Sigmoid colon (tissue), 7 donors: ENCODE measurements at regions of chr19 and their contacts with region 1.

Region 1: GRCh38 chr19:55461259-55461973 is at the start of gene ISOC2:
- DNase-seq: peak; percentile 100
- H3K4me3 ChIP-seq: peak within 1 kb of the TSS; percentile 61 to 93 (median 86)
- H3K27ac ChIP-seq: peak within 1 kb of the TSS; percentile 93 to 98 (median 96)
- H3K4me1 ChIP-seq: peaks cover 0 to 34% (median 24%) of the 10 kb centered on the region in 4 donors
- H3K27me3 ChIP-seq: no peaks in the 10 kb centered on the region
- CTCF ChIP-seq: no peak
- EP300 ChIP-seq: no peak
- POLR2A ChIP-seq: peak; percentile 77 to 78
- total RNA-seq, gene ISOC2: 90.3 to 114 (median 101) TPM

Region 2: DNA sequence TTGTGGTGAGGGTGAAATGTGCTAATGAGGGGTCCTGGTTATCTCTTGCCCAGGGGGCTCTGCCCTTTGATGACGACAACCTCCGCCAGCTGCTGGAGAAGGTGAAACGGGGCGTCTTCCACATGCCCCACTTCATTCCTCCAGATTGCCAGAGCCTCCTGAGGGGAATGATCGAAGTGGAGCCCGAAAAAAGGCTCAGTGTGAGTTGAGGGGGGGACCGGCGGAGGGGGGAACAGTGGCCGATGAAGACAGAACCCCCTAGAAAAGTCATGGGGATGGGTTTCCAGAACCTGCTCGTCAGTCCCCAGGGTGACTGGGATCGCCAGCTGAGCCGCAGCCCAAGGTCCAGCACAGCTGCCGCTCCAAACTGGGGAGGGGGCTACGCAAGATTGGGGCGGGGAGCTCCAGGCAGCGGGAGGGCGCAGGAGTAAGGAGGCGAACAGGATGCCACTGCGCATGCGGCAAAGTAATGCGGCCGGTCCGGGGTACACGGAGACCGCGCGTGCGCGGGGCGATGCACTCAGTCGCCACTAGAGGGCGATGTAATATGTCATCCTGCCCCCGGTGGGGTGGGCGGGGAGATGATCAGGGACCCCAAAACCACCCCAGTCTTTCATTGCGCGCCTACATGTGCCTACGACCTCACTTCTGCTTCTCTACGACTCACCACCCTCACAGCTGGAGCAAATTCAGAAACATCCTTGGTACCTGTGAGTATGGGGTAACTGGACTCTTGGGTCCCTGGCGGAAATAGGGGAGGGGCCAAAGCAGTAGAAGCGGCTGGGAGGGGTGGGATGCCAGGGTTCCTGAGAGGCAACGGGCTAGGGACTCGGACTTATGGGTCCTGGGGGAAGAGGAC is 159.7 kb before region 1 on chr19:
- intact Hi-C with region 1: no loop called
- DNase-seq: peak; percentile 93
- H3K4me3 ChIP-seq: peak overlapping the region in 3 of 4 donors; percentile 30 to 44 (median 38)
- H3K27ac ChIP-seq: peak overlapping the region in 1 of 4 donors; percentile 42
- H3K4me1 ChIP-seq: peaks cover 0 to 13% (median 10%) of the 10 kb centered on the region in 4 donors
- H3K27me3 ChIP-seq: no peaks in the 10 kb centered on the region
- CTCF ChIP-seq: peak; percentile 91 to 100 (median 95)
- EP300 ChIP-seq: no peak
- POLR2A ChIP-seq: no peak

Region 3: GRCh38 chr19:55407800-55408532 is 53.5 kb before region 1 on chr19:
- intact Hi-C with region 1: loop called (anchors 2 kb)
- DNase-seq: peak; percentile 100
- H3K4me3 ChIP-seq: peak overlapping the region; percentile 82 to 99 (median 89)
- H3K27ac ChIP-seq: peak overlapping the region; percentile 96 to 100 (median 98)
- H3K4me1 ChIP-seq: peaks cover 0 to 22% (median 20%) of the 10 kb centered on the region in 4 donors
- H3K27me3 ChIP-seq: no peaks in the 10 kb centered on the region
- CTCF ChIP-seq: no peak
- EP300 ChIP-seq: peak in 1 of 4 donors; percentile 36
- POLR2A ChIP-seq: peak; percentile 31 to 59

Region 4: GRCh38 chr19:55447421-55448174 is 13.8 kb before region 1 on chr19:
- intact Hi-C with region 1: no loop called
- DNase-seq: no peak
- H3K4me3 ChIP-seq: no peak overlapping the region
- H3K27ac ChIP-seq: no peak overlapping the region
- H3K4me1 ChIP-seq: peaks cover 0 to 22% (median 21%) of the 10 kb centered on the region in 4 donors
- H3K27me3 ChIP-seq: peaks cover 49 to 71% (median 54%) of the 10 kb centered on the region in 3 donors
- CTCF ChIP-seq: no peak
- EP300 ChIP-seq: no peak
- POLR2A ChIP-seq: no peak

Region 5: DNA sequence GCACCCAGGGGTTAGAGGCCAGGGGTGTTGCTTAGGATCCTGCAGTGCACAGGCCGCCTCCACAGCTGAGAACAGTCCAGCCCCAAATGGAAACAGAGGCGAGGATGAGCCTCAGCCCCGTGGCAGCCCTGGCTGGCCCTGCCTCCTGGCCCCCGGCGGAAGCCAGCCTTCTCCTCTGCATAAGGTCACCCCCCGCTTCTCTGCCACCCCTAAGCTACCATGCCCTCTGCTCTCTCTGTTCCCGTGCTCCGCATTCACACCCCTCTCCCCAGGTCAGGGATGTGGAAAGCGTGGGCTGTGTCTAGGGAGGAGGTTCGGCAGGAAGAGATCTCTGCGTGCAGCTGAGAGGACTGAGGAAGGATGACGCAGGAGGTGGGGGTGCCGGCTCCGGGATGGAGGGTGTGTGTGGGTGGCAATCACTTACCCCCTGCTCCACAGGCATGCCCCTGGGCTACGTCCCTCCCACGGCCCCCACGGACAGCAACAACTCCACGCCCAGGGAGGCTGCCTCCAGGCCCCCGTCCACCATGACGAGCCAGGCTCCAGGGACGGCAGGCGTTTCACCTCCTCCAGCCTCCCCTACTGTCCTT is 32.9 kb after region 1 on chr19:
- intact Hi-C with region 1: no loop called
- DNase-seq: peak; percentile 81
- H3K4me3 ChIP-seq: peak overlapping the region in 3 of 4 donors; percentile 25 to 50 (median 27)
- H3K27ac ChIP-seq: peak overlapping the region; percentile 69 to 99 (median 94)
- H3K4me1 ChIP-seq: peaks cover 0 to 62% (median 56%) of the 10 kb centered on the region in 4 donors
- H3K27me3 ChIP-seq: no peaks in the 10 kb centered on the region
- CTCF ChIP-seq: no peak
- EP300 ChIP-seq: no peak
- POLR2A ChIP-seq: peak in 1 of 2 donors; percentile 20

Region 6: GRCh38 chr19:55526216-55527196 is 65.1 kb after region 1 on chr19:
- intact Hi-C with region 1: no loop called
- DNase-seq: no peak
- H3K4me3 ChIP-seq: no peak overlapping the region
- H3K27ac ChIP-seq: no peak overlapping the region
- H3K4me1 ChIP-seq: peaks cover 0 to 15% (median 12%) of the 10 kb centered on the region in 4 donors
- H3K27me3 ChIP-seq: peaks cover 0 to 28% (median 8%) of the 10 kb centered on the region in 3 donors
- CTCF ChIP-seq: no peak
- EP300 ChIP-seq: no peak
- POLR2A ChIP-seq: no peak